ENCODE measurements at regions of chr15 and their contacts with region 1.

Region 1: DNA sequence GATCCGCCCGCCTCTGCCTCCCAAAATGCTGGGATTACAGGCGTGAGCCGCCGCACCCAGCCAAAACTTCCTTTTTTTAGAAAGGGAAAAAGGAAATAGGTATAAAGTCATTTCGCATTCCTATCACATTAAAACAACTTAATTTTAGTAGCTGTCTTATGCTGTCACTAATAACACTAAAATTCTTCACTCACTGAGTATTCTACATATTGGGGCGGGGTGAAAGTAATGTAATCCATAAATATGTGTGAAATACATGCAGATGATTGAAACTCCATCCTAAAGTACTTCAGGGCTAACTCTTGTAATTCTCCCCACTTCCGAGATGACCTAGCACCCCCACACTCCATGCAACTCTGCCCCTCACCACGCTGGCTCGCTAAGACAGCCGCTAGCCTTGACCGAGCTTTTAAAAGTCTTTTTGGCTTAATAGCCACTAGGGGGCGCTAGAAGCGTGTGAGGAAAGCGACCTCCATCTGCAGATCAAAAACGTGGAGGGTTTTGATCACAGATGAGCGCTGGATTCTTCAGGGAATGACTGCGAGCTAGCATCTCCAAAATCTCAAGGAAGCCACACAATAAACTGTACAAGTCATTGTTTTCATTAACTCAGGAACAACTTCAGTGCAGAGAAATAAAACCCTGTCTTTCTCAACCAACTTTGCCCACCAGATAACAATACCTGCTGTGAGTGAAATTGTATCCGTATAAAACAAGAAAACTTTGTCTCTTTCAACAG is 129.3 kb upstream of the IGF1R start:
- H3K4me3 Mint-ChIP-seq: no peak overlapping the region
- H3K27ac Mint-ChIP-seq: no peak overlapping the region
- H3K4me1 Mint-ChIP-seq: peaks cover 7% of the 10 kb centered on the region
- H3K27me3 Mint-ChIP-seq: peaks cover 5% of the 10 kb centered on the region

Region 2: GRCh38 chr15:98626153-98626552 is 107.2 kb after region 1 on chr15:
- intact Hi-C with region 1: no loop called
- H3K4me3 Mint-ChIP-seq: no peak overlapping the region
- H3K27ac Mint-ChIP-seq: no peak overlapping the region
- H3K4me1 Mint-ChIP-seq: no peaks in the 10 kb centered on the region
- H3K27me3 Mint-ChIP-seq: peaks cover 27% of the 10 kb centered on the region

Region 3: DNA sequence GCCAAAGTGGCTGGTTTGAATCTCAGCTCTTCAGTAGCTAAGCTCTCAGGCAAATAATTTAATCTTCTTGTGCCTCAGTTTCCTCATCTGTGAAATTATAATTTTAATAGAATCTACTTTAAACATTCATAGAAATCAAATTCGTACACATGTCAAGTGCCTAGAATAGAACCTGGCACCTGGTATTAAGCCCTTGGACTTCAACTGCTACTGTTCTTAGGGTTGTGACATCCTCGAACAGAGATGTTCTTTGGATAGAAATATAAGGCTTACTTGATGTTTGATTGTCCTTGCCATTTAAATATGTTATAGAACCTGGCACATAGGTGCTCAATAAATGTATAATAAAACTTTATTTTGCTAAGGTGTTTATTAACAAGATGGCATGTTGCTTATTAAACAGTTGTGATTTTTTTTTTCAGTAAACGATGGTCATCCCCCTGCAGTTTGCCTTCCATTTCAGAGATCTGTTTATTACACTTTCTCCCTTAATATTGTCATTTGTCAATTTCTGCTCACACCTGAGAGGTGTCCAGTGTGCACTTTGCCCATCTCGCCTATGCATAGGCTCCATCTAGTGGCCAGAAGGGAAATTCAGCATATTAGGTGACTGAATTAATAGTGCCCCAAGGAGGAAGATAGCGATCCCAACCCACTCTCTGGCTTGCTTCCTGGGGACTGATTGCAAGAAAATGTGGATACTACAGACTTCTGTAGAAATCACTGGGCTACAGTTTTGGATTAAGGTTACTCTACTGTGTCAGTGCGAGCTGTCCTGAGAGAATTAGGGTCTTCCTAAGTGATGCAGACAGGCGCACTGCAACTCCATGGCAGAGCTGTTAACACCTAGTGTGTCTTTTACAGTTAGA is 140.1 kb after region 1 on chr15:
- intact Hi-C with region 1: loop called (anchors 1 kb)
- H3K4me3 Mint-ChIP-seq: no peak overlapping the region
- H3K27ac Mint-ChIP-seq: no peak overlapping the region
- H3K4me1 Mint-ChIP-seq: peaks cover 30% of the 10 kb centered on the region
- H3K27me3 Mint-ChIP-seq: peaks cover 3% of the 10 kb centered on the region

Region 4: GRCh38 chr15:98850961-98851573 is 332.1 kb after region 1 on chr15:
- intact Hi-C with region 1: loop called (anchors 2 kb)
- H3K4me3 Mint-ChIP-seq: peak overlapping the region; percentile 91
- H3K27ac Mint-ChIP-seq: peak overlapping the region; percentile 93
- H3K4me1 Mint-ChIP-seq: peaks cover 54% of the 10 kb centered on the region
- H3K27me3 Mint-ChIP-seq: no peaks in the 10 kb centered on the region

Region 5: GRCh38 chr15:98881526-98882520 is 362.8 kb after region 1 on chr15:
- intact Hi-C with region 1: loop called (anchors 1 kb)
- H3K4me3 Mint-ChIP-seq: no peak overlapping the region
- H3K27ac Mint-ChIP-seq: no peak overlapping the region
- H3K4me1 Mint-ChIP-seq: peaks cover 8% of the 10 kb centered on the region
- H3K27me3 Mint-ChIP-seq: no peaks in the 10 kb centered on the region

Region 6: GRCh38 chr15:99059010-99059981 is 540.3 kb after region 1 on chr15:
- intact Hi-C with region 1: loop called (anchors 2 kb)
- H3K4me3 Mint-ChIP-seq: peak overlapping the region; percentile 51
- H3K27ac Mint-ChIP-seq: no peak overlapping the region
- H3K4me1 Mint-ChIP-seq: peaks cover 10% of the 10 kb centered on the region
- H3K27me3 Mint-ChIP-seq: peaks cover 60% of the 10 kb centered on the region

Region 7: DNA sequence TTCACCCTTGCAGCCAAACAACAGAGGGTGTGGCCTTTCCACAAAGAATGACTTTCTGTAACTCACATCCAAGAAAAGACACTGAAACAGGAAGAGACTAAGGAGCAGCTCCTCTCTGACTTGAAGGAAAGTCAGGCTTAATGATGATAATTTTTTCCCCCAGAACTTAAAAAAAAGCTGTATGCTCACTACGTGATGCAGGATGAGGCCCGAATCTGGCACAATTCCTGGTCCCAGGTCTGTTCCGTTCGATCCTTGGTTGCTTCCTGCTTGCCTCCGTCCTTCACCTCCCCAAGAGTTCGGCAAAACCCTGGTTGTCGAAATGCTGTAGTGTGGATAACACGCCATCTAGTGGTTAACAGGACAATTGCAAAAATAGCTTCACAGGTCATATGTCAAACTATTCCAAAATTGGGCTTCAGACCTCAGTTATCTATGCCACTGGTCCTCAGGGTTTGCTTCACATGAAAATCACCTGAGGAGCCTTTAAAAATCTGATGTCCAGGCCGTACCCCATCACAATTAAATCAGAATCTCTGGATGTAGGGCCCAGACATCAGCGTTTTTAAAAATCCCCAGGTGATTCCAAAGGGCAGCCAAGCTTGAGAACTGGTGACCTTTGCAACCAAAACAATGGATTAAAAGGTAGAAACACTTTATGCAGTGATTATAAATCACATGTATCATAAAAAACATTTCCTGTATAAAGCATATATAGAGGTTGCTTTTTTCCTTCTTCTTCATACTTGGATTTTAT is 557.7 kb after region 1 on chr15:
- intact Hi-C with region 1: loop called (anchors 5 kb)
- H3K4me3 Mint-ChIP-seq: peak overlapping the region; percentile 80
- H3K27ac Mint-ChIP-seq: peak overlapping the region; percentile 14
- H3K4me1 Mint-ChIP-seq: peaks cover 5% of the 10 kb centered on the region
- H3K27me3 Mint-ChIP-seq: peaks cover 11% of the 10 kb centered on the region